ENCODE measurements at regions of chr9 and their contacts with region 1.

Region 1: DNA sequence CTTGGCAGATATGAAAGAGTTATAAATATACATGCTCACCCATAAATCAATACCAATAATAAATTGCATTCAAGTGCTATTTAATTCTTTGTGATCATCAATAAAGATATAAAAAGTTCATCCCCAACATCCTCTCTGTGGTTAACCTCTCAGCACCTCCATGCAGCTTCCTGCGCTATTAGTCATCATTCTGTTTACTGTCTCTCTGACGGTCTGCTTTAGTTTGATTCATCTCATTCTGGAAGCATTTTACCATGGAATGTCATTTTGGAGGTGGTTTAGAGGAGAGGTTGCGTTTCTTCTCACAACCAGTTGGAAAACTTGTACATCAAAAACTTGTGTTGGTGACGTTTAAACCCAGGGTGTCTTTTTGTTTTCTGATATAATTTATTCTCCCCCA is 486.6 kb downstream of the BRINP1 start:
- DNase-seq: no peak
- ATAC-seq: no peak
- H3K4me3 ChIP-seq: no peak overlapping the region
- H3K4me3 Mint-ChIP-seq: no peak overlapping the region
- H3K27ac ChIP-seq: no peak overlapping the region
- H3K27ac Mint-ChIP-seq: no peak overlapping the region
- H3K4me1 ChIP-seq: no peaks in the 10 kb centered on the region
- H3K4me1 Mint-ChIP-seq: no peaks in the 10 kb centered on the region
- H3K27me3 ChIP-seq: no peaks in the 10 kb centered on the region
- H3K27me3 Mint-ChIP-seq: no peaks in the 10 kb centered on the region
- CTCF ChIP-seq: no peak

Region 2: GRCh38 chr9:118643118-118643517 is 239.6 kb before region 1 on chr9:
- CTCF ChIA-PET with region 1: no interaction called
- POLR2A ChIA-PET with region 1: no interaction called
- intact Hi-C with region 1: no loop called
- DNase-seq: no peak
- ATAC-seq: no peak
- H3K4me3 ChIP-seq: no peak overlapping the region
- H3K4me3 Mint-ChIP-seq: no peak overlapping the region
- H3K27ac ChIP-seq: no peak overlapping the region
- H3K27ac Mint-ChIP-seq: no peak overlapping the region
- H3K4me1 ChIP-seq: no peaks in the 10 kb centered on the region
- H3K4me1 Mint-ChIP-seq: no peaks in the 10 kb centered on the region
- H3K27me3 ChIP-seq: no peaks in the 10 kb centered on the region
- H3K27me3 Mint-ChIP-seq: no peaks in the 10 kb centered on the region
- CTCF ChIP-seq: no peak

Region 3: GRCh38 chr9:118829334-118829733 is 53.4 kb before region 1 on chr9:
- CTCF ChIA-PET with region 1: no interaction called
- POLR2A ChIA-PET with region 1: no interaction called
- intact Hi-C with region 1: loop called in 1 of 2 experiments (anchors 5 kb)
- DNase-seq: no peak
- ATAC-seq: no peak
- H3K4me3 ChIP-seq: no peak overlapping the region
- H3K4me3 Mint-ChIP-seq: no peak overlapping the region
- H3K27ac ChIP-seq: no peak overlapping the region
- H3K27ac Mint-ChIP-seq: no peak overlapping the region
- H3K4me1 ChIP-seq: no peaks in the 10 kb centered on the region
- H3K4me1 Mint-ChIP-seq: no peaks in the 10 kb centered on the region
- H3K27me3 ChIP-seq: no peaks in the 10 kb centered on the region
- H3K27me3 Mint-ChIP-seq: no peaks in the 10 kb centered on the region
- CTCF ChIP-seq: no peak

Region 4: GRCh38 chr9:118896324-118897000 is 13.8 kb after region 1 on chr9:
- CTCF ChIA-PET with region 1: no interaction called
- POLR2A ChIA-PET with region 1: no interaction called
- intact Hi-C with region 1: no loop called
- DNase-seq: no peak
- ATAC-seq: no peak
- H3K4me3 ChIP-seq: no peak overlapping the region
- H3K4me3 Mint-ChIP-seq: no peak overlapping the region
- H3K27ac ChIP-seq: no peak overlapping the region
- H3K27ac Mint-ChIP-seq: no peak overlapping the region
- H3K4me1 ChIP-seq: no peaks in the 10 kb centered on the region
- H3K4me1 Mint-ChIP-seq: no peaks in the 10 kb centered on the region
- H3K27me3 ChIP-seq: no peaks in the 10 kb centered on the region
- H3K27me3 Mint-ChIP-seq: no peaks in the 10 kb centered on the region
- CTCF ChIP-seq: no peak

Measured in CD4-positive, alpha-beta T cell (primary cell).